ENCODE measurements at regions of chr1 and their contacts with region 1.

Region 1: DNA sequence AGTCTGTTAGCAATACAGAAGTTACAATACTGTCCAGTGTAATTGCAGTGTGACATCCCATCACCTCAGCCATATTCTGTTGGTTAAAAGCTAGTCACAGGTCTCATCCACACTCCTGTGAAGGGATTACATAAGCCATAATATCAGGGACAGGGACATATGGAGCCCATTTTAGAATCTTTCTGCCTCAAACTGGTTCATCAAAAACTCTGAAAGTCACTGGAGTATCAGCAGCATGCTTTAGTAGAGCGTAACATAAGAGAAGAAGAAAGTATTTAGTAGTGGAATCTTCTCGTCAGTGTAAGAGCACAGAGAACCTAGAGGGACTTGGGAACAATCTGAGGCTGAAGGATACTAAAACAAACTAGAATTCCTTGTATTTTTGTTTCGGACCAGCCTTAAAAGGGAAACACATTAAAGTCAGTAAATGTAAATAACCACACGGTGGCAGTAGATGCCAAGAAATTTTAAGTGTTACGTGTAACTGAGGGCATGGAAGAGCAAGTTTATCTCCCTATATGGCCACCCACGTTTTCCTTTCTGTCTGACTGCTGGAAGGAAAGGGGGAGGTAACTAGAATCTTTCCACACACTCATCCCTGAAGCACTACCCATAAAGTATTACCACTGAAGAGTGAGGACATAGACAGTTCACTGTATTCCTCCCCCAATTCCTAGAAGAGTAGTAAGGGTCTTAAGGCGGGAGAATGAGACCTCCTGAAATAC is 41.6 kb upstream of the AGL start:
- DNase-seq: no peak
- ATAC-seq: peak; percentile 94

Region 2: DNA sequence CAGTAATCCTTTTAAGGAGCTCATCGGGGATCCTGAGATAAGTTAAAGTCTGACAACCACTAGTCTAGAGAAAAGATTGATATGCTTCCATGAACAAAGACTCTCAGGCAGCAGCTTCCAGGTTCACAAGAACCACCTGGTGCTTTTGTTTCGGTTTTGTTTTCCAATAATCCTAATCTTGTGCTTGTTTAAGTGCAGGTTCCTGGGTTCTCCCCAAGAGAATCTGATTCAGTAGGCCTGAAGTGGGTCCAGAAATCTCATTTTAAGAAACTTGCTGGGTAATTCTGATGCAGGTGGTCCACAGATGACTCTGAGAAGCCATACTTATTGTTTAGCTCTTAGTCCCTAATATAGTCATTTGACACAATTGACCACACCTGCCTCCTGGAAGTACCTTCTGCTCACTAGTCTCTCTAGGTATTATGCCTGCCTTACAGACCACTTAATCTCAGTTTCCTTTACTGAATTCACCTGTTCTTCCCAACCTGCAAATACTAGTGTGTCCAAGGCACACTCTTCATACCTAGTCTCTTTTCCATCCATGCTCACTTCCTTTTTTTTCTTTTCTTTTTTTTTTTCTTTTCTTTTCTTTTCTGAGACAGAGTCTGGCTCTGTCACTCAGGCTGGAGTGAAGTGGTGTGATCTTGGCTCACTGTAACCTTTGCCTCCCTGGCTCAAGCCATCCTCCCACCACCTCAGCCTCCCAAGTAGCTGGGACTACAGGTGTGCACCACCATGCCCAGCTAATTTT is 21.6 kb before region 1 on chr1:
- intact Hi-C with region 1: no loop called
- DNase-seq: no peak
- ATAC-seq: no peak

Region 3: GRCh38 chr1:100459358-100460114 is 651.0 kb after region 1 on chr1:
- intact Hi-C with region 1: loop called (anchors 10 kb)
- DNase-seq: peak; percentile 78
- ATAC-seq: peak; percentile 90